HAP-1 (cell line): ENCODE measurements at regions of chr1 and their contacts with region 1.

Region 1: DNA sequence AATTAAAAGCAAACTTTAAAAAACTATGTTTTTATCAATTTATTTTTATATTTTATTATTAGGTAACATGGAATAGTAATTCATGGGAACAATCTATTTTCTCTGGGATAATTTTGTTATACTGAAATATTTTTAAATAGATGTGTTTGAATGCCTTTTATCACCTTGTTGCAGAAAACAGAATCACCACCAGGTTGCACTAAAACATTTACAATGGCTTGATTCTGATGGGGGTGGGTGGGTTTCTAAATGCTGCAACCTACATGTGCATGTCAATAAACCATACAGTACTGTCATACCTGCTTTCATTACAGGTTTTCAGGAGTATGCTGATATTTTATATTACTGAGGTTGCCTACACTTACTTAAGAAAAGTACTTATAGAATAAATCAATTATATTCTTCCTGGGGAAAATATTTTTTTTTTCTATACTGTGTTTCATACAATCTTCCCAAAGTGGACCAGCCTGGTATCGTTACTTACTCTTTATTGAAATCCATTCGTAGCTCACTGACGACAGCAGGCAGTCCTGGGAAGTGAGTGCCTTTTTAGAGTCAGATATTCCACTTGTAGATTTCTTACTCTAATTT is 132.8 kb downstream of the PTPRC start:
- DNase-seq: peak; percentile 50 to 59
- H3K4me3 ChIP-seq: no peak overlapping the region
- H3K4me1 ChIP-seq: no peaks in the 10 kb centered on the region
- H3K27me3 ChIP-seq: no peaks in the 10 kb centered on the region; the same call in 1 of the 2 replicates

Region 2: DNA sequence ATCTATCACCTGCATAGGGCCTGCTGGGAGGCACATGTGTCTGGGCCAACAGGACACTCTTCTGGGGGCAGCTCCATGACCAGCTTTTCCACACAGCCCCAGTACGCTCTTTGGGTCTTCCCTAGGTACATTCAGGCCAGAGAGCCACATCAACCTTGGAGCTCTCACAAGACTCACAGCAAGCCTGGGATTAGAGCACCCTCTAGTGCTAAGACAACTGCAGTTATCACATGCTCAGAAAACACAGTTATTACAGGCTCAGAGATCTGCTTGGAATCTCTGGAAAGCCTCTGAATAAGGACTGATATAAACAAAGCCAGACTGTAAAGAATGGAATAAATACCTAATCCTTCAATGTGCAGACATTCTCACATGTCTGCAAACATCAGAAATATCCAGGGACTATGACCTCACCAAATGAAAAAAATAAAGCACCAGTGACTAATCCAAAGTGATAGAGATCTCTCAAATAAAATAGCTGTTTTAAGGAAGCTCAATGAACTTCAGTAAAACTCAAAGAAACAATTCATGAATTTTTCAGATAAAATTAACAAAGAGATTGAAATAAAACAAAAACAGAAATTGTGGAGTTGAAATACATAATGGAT is 692.0 kb after region 1 on chr1:
- in situ Hi-C with region 1: loop called (anchors 25 kb)
- DNase-seq: peak; percentile 64 to 69
- H3K4me3 ChIP-seq: no peak overlapping the region
- H3K4me1 ChIP-seq: no peaks in the 10 kb centered on the region
- H3K27me3 ChIP-seq: no peaks in the 10 kb centered on the region

Region 3: GRCh38 chr1:199551967-199552565 is 780.4 kb after region 1 on chr1:
- in situ Hi-C with region 1: loop called (anchors 25 kb)
- DNase-seq: peak; percentile 56 to 73
- H3K4me3 ChIP-seq: no peak overlapping the region
- H3K4me1 ChIP-seq: no peaks in the 10 kb centered on the region
- H3K27me3 ChIP-seq: no peaks in the 10 kb centered on the region